GM12878 (cell line): ENCODE measurements at regions of chr6 and their contacts with region 1.

Region 1: DNA sequence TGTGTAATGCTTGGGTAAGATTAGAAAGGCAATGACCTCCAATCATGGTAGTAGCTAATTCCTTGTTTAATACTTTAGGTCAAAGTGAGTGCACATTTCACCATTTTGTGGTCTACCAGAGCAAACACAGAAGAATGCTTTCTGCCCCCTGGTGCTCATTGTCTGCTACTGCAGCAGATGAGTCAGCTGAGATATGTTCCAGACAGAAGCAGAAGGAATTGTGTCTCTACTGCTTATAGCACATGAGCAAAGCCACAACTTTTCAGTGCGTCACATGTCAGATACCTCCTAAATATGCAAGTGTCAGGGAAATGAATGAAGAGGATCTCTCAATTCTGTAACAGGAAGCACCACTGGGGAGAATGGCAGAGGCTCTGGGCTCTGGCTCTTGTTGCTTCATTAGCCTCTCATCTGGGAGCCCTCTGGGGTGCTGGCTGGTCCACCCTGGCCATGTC is 308.9 kb downstream of the ALDH8A1 start:
- DNase-seq: peak; percentile 45
- ATAC-seq: peak; percentile 90
- H3K4me3 ChIP-seq: no peak overlapping the region
- H3K27ac ChIP-seq: no peak overlapping the region
- H3K4me1 ChIP-seq: no peaks in the 10 kb centered on the region
- H3K27me3 ChIP-seq: no peaks in the 10 kb centered on the region; a peak in 1 of 4 replicates
- CTCF ChIP-seq: peak; percentile 89 to 98 (median 93); a peak in 5 of 6 replicates
- EP300 ChIP-seq: no peak
- POLR2A ChIP-seq: no peak
- RAD21 ChIP-seq: peak; percentile 93

Region 2: GRCh38 chr6:134161036-134161435 is 480.0 kb before region 1 on chr6:
- CTCF ChIA-PET with region 1: interaction called, 17 read pairs
- POLR2A ChIA-PET with region 1: no interaction called
- RAD21 ChIA-PET with region 1: interaction called, 4 read pairs
- SMC1A ChIA-PET with region 1: interaction called, 7 read pairs
- in situ Hi-C with region 1: no loop called
- intact Hi-C with region 1: no loop called
- DNase-seq: no peak
- ATAC-seq: no peak
- H3K4me3 ChIP-seq: no peak overlapping the region
- H3K27ac ChIP-seq: no peak overlapping the region
- H3K4me1 ChIP-seq: no peaks in the 10 kb centered on the region
- H3K27me3 ChIP-seq: no peaks in the 10 kb centered on the region
- CTCF ChIP-seq: no peak
- EP300 ChIP-seq: no peak
- POLR2A ChIP-seq: no peak
- RAD21 ChIP-seq: no peak

Region 3: DNA sequence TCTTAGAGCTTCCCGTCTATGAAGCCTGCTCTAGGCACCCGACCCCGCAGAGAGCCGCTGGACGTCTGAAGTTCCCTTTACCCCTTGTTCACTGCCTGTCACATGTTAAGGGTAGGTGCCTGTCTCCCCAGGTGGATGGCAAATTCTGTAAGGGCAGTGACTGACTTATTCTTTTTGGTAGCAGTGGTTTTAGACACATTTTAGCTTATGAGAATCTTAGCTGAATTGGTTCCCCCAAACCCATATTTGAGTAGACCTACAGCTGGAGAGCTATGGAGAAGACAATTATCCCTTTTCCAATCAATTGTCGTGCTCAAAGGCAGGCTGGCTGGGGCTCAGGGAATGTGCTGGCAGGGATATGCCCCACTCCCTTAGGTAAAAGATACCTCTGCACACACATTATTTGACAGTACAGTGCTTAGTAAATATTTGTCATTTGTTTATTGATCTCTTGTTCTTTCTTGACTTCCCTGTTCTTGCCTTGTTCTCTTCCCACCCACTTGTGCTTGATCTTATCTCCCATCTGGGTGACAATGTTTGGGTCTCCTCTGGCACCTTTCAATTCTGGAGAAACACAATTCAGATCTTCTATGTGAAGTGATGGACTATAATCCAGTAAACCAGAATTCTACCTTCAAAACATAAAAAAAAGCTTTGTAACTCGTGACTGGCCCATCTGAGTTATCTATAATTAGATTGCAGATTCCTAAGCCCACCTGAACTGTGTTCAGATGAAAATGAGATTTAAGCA is 474.3 kb before region 1 on chr6:
- CTCF ChIA-PET with region 1: interaction called, 17 read pairs
- POLR2A ChIA-PET with region 1: no interaction called
- RAD21 ChIA-PET with region 1: interaction called, 5 read pairs
- SMC1A ChIA-PET with region 1: interaction called, 12 read pairs
- in situ Hi-C with region 1: loop called (anchors 5 kb)
- intact Hi-C with region 1: no loop called
- DNase-seq: no peak
- ATAC-seq: no peak
- H3K4me3 ChIP-seq: no peak overlapping the region
- H3K27ac ChIP-seq: no peak overlapping the region
- H3K4me1 ChIP-seq: no peaks in the 10 kb centered on the region
- H3K27me3 ChIP-seq: no peaks in the 10 kb centered on the region
- CTCF ChIP-seq: no peak
- EP300 ChIP-seq: no peak
- POLR2A ChIP-seq: no peak
- RAD21 ChIP-seq: no peak

Region 4: DNA sequence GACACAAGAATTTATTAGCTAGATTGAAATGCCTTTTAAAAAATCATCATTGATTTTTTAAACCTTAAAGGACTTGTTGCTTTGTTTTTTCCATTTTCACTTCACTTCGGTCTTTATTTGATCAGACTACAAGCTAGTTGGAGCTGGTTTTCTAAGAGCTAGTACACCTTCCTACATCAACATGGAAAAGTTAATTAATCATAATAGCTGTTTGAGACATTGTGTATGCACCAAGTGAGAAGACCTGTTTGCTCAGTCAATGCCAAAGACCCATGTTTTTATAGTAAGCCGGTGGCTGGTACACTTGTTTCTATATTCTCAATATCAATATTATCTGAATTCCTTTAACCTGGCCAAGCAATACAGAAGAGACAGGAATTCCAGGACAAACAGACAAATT is 12.8 kb before region 1 on chr6:
- CTCF ChIA-PET with region 1: interaction called, 20 read pairs
- POLR2A ChIA-PET with region 1: no interaction called
- RAD21 ChIA-PET with region 1: interaction called, 3 read pairs
- SMC1A ChIA-PET with region 1: interaction called, 15 read pairs
- in situ Hi-C with region 1: no loop called
- intact Hi-C with region 1: no loop called
- DNase-seq: no peak
- ATAC-seq: no peak
- H3K4me3 ChIP-seq: no peak overlapping the region
- H3K27ac ChIP-seq: no peak overlapping the region
- H3K4me1 ChIP-seq: no peaks in the 10 kb centered on the region
- H3K27me3 ChIP-seq: peaks cover 0 to 3% of the 10 kb centered on the region in 2 experiments; a peak in 1 of 4 replicates
- CTCF ChIP-seq: no peak
- EP300 ChIP-seq: no peak
- POLR2A ChIP-seq: no peak
- RAD21 ChIP-seq: no peak

Region 5: GRCh38 chr6:134822920-134823709 is 182.1 kb after region 1 on chr6:
- CTCF ChIA-PET with region 1: interaction called, 7 read pairs
- POLR2A ChIA-PET with region 1: no interaction called
- RAD21 ChIA-PET with region 1: no interaction called
- SMC1A ChIA-PET with region 1: interaction called, 3 read pairs
- in situ Hi-C with region 1: no loop called
- intact Hi-C with region 1: loop called (anchors 5 kb)
- DNase-seq: peak; percentile 36
- ATAC-seq: peak; percentile 95
- H3K4me3 ChIP-seq: no peak overlapping the region
- H3K27ac ChIP-seq: no peak overlapping the region
- H3K4me1 ChIP-seq: no peaks in the 10 kb centered on the region; the same call in 1 of the 2 replicates
- H3K27me3 ChIP-seq: no peaks in the 10 kb centered on the region
- CTCF ChIP-seq: peak; percentile 78 to 89 (median 80)
- EP300 ChIP-seq: no peak
- POLR2A ChIP-seq: no peak
- RAD21 ChIP-seq: peak; percentile 84

Region 6: DNA sequence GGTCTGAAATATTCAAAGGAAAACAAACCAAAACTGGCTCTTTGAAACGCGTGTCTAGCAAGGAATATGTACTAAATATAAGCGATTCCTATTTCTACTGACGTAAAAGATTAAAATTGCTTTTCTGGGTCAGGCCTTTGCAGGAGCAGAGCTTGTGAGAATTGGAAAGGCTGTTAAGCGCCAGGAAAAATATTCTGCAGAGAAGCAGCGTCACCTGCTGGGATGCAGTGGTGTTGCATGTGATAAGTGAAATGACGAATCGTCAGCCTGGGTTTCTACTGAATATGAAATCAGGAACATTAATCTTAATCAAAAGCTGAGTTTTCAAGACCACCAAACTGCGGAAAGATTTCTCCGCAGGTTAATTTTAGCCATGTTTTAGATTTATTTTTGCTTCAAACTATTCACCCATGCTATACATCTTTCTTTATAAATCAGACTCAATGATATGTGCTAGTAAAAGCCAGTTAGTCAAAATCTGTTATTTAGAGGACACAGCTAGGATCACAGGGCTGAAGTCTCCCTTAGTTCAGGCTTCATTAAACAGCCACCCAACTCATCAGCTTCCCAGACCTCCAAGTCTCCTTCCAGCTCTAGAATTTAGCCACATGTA is 241.5 kb after region 1 on chr6:
- CTCF ChIA-PET with region 1: interaction called, 5 read pairs
- POLR2A ChIA-PET with region 1: no interaction called
- RAD21 ChIA-PET with region 1: no interaction called
- SMC1A ChIA-PET with region 1: interaction called, 3 read pairs
- in situ Hi-C with region 1: no loop called
- intact Hi-C with region 1: loop called (anchors 5 kb)
- DNase-seq: no peak
- ATAC-seq: peak; percentile 44; the same call in 2 of the 3 replicates
- H3K4me3 ChIP-seq: no peak overlapping the region
- H3K27ac ChIP-seq: no peak overlapping the region
- H3K4me1 ChIP-seq: no peaks in the 10 kb centered on the region
- H3K27me3 ChIP-seq: 0 out of 4 replicates have a peak, but pooled peaks cover 0 to 1% of the 10 kb centered on the region in 2 experiments
- CTCF ChIP-seq: peak; percentile 71 to 80 (median 76)
- EP300 ChIP-seq: no peak
- POLR2A ChIP-seq: no peak
- RAD21 ChIP-seq: peak; percentile 96